ENCODE measurements at regions of chr12 and their contacts with region 1.

Region 1: DNA sequence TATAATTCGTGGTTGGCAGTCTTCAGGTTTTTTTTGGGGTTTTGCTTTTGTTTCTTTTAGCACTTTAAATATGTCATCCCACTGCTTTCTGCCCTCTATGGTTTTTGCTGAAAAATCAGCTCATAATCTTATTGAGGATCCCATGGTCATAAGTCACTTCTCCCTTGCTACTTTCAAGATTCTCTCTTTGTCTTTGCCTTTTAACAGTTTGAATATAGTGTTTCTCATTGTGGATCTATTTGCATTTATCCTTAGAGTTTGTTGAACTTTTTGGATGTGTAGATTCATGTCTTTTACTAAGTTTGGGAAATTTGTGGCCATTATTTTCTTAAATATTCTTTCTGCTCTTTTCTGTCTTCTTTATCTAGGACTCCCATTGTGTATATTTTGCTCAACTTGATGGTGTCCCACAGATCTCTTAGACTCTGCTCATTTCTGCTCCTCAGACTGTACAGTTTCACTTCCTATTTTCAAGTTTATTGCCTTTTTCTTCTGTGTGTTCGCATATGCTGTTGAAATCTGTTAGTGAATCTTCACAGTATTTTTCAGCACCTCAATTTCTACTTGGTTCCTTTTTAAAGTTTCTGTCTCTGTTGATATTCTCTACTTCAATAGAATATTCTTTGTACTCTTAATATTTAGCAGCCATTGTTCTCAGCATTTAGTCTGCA is 70.8 kb downstream of the WNK1 start:
- DNase-seq: no peak
- H3K4me3 ChIP-seq: no peak overlapping the region
- H3K27ac ChIP-seq: no peak overlapping the region
- H3K4me1 ChIP-seq: peaks cover 0 to 33% (median 11%) of the 10 kb centered on the region in 4 donors
- H3K27me3 ChIP-seq: no peaks in the 10 kb centered on the region
- CTCF ChIP-seq: no peak

Region 2: DNA sequence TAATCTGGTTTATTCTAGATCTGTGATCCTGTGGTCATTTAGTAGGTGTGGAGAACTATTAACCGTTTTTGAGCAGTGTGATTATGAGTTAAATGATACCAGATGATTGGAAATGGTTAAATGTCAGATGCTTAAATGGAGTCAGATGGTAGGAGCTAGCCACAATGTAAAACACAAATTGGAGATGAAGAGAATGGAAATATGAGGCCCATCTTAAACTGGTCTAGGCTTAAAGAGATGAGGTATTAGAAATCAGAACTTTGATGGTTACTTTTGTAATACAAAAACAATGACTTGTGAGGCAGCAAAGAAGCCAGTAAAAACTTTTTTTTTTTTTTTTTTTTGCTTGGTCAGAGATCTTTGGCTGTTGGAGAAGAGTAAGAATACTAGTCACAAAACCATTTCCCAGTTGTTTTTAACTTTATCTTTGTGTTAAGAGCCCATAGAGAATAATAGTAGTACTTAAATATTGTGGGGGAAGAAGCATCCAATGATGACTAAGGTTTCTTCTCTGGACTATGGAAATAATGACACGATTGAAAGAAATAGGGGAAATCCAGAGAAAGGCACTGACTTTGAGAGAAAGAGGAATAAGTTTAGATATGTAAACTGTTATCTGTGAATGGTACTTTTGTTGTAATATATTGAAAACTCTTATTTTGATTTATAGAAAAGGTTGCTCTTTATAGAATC is 25.2 kb after region 1 on chr12:
- intact Hi-C with region 1: no loop called
- DNase-seq: no peak
- H3K4me3 ChIP-seq: no peak overlapping the region
- H3K27ac ChIP-seq: no peak overlapping the region
- H3K4me1 ChIP-seq: peaks cover 0 to 38% (median 14%) of the 10 kb centered on the region in 4 donors
- H3K27me3 ChIP-seq: no peaks in the 10 kb centered on the region
- CTCF ChIP-seq: no peak

Region 3: DNA sequence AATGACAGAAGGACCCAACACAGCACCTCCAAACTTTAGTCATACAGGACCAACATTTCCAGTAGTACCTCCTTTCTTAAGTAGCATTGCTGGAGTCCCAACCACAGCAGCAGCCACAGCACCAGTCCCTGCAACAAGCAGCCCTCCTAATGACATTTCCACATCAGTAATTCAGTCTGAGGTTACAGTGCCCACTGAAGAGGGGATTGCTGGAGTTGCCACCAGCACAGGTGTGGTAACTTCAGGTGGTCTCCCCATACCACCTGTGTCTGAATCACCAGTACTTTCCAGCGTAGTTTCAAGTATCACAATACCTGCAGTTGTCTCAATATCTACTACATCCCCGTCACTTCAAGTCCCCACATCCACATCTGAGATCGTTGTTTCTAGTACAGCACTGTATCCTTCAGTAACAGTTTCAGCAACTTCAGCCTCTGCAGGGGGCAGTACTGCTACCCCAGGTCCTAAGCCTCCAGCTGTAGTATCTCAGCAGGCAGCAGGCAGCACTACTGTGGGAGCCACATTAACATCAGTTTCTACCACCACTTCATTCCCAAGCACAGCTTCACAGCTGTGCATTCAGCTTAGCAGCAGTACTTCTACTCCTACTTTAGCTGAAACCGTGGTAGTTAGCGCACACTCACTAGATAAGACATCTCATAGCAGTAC is 61.7 kb after region 1 on chr12:
- intact Hi-C with region 1: no loop called
- DNase-seq: no peak
- H3K4me3 ChIP-seq: no peak overlapping the region
- H3K27ac ChIP-seq: no peak overlapping the region
- H3K4me1 ChIP-seq: no peaks in the 10 kb centered on the region
- H3K27me3 ChIP-seq: no peaks in the 10 kb centered on the region
- CTCF ChIP-seq: no peak

Region 4: DNA sequence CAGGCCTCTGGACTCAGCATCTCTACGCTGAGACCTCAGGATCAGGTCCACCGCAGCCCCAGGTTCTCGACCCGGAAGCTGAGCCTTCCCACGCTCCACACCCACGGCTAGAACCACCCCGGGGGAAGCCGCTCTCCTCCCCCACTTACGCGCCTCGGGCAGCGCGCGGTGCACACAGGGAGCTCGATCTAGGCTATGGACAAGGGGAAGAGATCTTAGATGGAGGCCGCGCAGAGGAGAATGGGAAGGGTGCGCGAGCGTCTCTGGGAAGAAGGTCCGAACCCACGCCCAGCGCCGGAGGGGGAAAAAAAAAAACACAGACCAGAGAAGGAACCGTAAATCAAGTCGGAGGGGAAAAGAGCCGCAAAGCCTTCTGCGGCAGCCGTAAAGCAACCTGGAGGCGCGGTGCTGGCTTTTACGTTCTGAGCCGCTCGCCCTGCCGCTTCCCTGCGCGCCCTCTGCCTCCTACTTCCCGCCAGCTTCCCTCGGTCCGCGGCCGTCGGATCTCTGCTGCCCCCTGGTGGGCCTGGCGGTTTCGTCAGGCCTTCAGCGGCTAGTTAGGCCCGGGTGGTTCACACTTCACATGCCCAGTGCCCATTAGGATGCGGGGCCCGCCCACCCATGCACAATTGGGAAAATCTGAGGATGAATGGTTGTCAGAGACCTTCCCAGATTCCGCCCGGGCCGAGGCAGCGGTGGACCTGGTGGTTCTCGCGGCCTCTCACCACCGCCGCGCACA is 126.5 kb after region 1 on chr12 and contains the start of gene RAD52:
- intact Hi-C with region 1: loop called (anchors 10 kb)
- DNase-seq: peak; percentile 96 to 99
- H3K4me3 ChIP-seq: peak within 1 kb of the TSS; percentile 84
- H3K27ac ChIP-seq: peak within 1 kb of the TSS; percentile 85 to 90
- H3K4me1 ChIP-seq: peaks cover 0 to 27% (median 9%) of the 10 kb centered on the region in 4 donors
- H3K27me3 ChIP-seq: no peaks in the 10 kb centered on the region
- CTCF ChIP-seq: peak; percentile 96 to 99